ENCODE measurements at regions of chr19 and their contacts with region 1.

Region 1: GRCh38 chr19:42529248-42529764 is 1.0 kb upstream of the CEACAM1 start:
- DNase-seq: peak; percentile 81 to 88
- H3K4me3 ChIP-seq: peak overlapping the region in 3 of 4 donors; percentile 2 to 42 (median 25)
- H3K27ac ChIP-seq: peak overlapping the region; percentile 54 to 85 (median 81)
- H3K4me1 ChIP-seq: peaks cover 7 to 38% (median 21%) of the 10 kb centered on the region in 4 donors
- H3K27me3 ChIP-seq: no peaks in the 10 kb centered on the region
- CTCF ChIP-seq: peak in 5 of 7 experiments; percentile 81 to 95 (median 94)
- EP300 ChIP-seq: no peak
- POLR2A ChIP-seq: no peak

Region 2: DNA sequence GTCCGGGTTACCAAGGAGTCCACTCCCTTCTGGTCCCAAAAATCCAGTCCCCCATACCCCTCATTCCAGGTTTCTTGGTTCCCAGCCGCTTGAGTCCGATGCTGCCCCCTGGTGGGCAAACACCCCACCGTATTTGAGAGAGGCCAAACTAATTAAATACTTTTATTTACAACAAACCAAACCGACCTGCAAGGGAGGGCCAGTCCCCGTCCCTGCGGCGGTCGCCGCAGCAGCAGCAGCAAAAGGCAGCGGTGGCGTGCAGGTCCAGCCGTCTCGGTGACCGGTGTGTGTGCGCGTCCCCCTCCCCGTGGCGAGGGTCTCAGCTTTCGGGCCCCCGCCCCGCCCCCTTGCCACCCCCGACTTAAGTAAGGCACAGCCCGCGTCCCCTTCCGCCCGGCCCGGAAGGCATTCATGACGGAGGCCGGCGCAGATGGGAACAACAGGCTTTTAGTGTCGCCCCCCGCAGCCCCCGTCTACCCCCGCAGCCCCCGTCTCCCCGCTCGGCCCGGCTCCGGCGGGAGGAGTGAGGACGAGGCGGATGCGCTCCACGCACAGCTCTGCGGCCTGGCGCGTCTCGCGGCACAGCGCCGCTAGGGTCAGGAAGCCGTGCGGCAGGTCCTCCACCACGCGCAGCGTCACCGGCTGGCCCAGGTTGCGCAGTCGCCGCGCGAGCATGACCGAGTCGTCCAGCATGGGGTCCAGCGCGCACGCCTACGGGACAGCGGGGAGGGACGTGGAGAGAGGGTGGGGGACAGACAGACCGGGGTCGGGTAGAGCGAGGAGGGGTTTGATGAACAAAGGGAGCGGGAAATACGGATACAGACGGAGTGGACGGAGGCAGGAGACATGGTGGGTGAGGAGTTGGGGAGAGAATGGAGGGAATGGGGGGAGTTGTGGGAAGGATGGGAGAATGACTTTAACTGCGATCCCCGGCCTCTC is 127.7 kb before region 1 on chr19:
- intact Hi-C with region 1: no loop called
- DNase-seq: peak; percentile 80 to 93
- H3K4me3 ChIP-seq: peak overlapping the region; percentile 59 to 69 (median 64)
- H3K27ac ChIP-seq: peak overlapping the region; percentile 39 to 78 (median 60)
- H3K4me1 ChIP-seq: peaks cover 18 to 37% (median 29%) of the 10 kb centered on the region in 4 donors
- H3K27me3 ChIP-seq: no peaks in the 10 kb centered on the region
- CTCF ChIP-seq: peak in 5 of 7 experiments; percentile 35 to 90 (median 67)
- EP300 ChIP-seq: no peak
- POLR2A ChIP-seq: no peak

Region 3: DNA sequence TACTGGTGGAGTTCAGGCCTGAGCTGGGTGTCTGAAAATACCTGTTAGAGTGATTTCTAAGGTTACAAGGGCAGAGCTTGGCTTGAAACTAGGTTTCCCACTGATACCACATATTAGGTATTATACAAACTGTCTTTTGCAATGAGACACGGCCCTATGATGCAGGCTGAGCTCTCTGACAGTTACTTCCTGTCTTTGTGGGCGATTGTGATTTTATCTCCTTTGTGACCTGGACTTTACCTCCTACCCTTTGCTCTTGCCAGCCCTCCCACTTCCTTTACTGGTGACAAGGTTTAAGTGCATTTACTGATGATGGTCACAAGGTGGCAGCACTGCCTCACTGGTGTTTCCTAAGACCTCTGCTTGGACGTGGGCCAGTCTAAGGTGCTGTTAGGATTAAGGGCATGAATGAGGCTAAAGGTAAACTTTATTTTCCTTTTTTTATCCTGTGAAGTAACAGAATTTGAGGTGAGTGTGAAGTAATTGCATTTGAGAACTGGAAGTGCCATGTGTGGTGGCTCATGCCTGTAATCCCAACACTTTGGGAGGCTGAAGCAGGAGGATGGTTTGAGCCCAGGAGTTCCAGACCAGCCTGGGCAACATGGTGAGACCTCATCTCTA is 78.9 kb before region 1 on chr19:
- intact Hi-C with region 1: loop called (anchors 10 kb)
- DNase-seq: peak; percentile 95 to 96
- H3K4me3 ChIP-seq: no peak overlapping the region
- H3K27ac ChIP-seq: peak overlapping the region; percentile 32 to 66 (median 40)
- H3K4me1 ChIP-seq: peaks cover 10 to 46% (median 23%) of the 10 kb centered on the region in 4 donors
- H3K27me3 ChIP-seq: no peaks in the 10 kb centered on the region
- CTCF ChIP-seq: peak in 6 of 7 experiments; percentile 71 to 97 (median 84)
- EP300 ChIP-seq: no peak
- POLR2A ChIP-seq: no peak